Activated CD4-positive, alpha-beta memory T cell treated with anti-CD3 and anti-CD28 coated beads, Interleukin-2, amount 10 ng/mL, durations not matched to agents 7 days and 5 days (primary cell): ENCODE measurements at regions of chr6 and their contacts with region 1.

Region 1: DNA sequence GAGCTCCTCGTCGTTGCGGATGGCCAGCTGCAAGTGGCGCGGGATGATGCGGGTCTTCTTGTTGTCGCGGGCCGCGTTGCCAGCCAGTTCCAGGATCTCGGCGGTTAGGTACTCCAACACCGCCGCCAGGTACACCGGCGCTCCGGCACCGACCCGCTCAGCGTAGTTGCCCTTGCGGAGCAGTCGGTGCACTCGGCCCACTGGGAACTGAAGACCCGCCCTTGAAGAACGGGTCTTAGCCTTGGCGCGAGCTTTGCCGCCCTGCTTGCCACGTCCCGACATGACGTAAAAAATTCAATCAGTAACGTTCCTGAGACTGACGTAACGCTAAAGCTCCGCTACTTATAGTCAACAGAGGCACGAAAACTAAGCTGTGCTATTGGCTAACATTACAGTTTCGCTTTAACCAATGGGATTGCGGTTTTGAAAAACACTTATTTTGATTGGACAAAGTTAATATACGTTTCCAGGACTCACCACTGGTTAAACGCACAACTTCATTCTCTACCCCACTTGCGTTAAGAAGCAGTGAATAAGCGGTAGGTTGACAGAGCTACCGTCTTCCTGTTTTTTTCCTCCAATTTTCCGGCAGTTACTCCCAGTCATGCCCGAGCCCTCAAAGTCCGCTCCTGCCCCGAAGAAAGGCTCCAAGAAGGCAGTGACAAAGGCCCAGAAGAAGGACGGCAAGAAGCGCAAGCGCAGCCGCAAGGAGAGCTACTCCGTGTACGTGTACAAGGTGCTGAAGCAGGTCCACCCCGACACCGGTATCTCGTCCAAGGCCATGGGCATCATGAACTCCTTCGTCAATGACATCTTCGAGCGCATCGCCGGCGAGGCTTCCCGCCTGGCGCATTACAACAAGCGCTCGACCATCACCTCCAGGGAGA is 73.9 kb downstream of the OR2B2 start:
- DNase-seq: peak; percentile 90
- H3K4me3 Mint-ChIP-seq: no peak overlapping the region
- H3K27ac Mint-ChIP-seq: no peak overlapping the region
- H3K4me1 Mint-ChIP-seq: peaks cover 31% of the 10 kb centered on the region
- H3K27me3 Mint-ChIP-seq: no peaks in the 10 kb centered on the region

Region 2: DNA sequence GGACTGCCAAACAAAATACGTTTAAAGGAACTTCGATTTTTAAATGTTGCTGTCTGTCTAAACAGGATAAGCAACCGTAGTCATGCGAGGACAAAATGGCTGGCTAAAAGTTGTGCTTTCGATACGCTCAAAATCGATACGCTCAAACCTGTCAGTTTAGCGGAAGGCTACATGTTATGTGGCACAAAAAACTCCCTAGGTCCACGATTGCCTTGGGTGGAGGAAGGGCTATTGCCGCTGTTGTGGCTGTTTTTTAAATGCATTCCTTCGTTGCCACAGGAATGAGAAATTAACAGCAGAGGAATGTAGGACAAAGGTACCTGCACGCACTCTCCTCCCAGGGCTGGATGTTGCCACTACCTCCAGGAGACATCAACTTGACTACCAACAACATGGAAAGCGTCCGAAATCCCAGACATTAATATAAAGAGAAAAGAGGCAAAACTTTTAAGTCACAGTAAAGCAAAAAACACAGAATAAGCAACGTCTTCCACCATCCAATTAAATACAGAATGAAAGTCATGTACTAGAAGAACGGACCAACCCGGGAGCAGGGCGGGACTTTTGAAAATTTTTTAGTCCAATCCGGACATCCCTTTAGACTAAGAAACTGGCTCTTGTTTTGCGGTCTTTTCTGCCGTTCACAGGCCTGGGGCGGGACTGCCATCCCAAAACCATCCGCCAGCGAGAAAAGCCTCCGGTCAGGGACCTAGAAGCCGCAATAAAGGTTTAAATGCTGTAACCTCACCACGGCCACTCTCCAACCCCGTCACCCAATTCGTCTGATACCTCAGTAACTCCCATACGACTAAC is 1783.2 kb before region 1 on chr6:
- CTCF ChIA-PET with region 1: no interaction called
- POLR2A ChIA-PET with region 1: interaction called, 10 read pairs
- DNase-seq: peak; percentile 92
- H3K4me3 Mint-ChIP-seq: peak overlapping the region; percentile 83
- H3K27ac Mint-ChIP-seq: peak overlapping the region; percentile 99
- H3K4me1 Mint-ChIP-seq: peaks cover 37% of the 10 kb centered on the region
- H3K27me3 Mint-ChIP-seq: no peaks in the 10 kb centered on the region

Region 3: DNA sequence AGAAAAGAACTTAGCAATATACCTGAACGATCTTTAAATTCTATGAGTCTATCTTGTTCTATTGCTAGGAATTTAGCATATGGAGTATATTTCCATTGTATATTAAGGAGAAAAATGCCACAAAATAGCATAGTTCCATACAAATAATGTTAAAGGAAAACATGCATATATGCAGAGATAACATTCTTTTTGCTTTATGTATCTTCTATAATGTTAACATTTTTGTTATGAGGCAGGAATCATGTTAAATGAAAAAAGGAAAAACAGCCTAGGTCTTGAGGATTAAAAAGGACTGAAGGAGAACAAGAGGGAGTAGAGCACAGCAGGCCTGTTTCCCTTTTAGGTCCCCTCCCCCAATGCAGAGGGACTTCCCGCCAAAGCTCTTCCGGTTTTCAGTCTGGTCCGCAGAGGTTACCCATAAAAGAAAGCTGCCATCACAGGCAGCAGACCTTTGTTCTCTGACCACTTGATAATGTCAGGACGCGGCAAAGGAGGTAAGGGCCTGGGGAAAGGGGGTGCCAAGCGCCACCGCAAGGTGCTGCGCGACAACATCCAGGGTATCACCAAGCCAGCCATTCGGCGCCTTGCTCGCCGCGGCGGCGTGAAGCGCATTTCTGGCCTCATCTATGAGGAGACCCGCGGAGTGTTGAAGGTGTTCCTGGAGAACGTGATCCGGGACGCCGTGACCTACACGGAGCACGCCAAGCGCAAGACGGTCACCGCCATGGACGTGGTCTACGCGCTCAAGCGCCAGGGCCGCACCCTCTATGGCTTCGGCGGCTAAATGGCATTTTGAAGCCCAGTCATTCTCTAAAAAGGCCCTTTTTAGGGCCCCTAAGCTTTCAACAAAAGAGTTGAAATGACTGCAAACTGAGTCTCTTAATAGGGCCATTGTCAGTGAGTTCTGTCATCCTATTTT is 699.2 kb before region 1 on chr6:
- CTCF ChIA-PET with region 1: no interaction called
- POLR2A ChIA-PET with region 1: interaction called, 108 read pairs
- DNase-seq: peak; percentile 80
- H3K4me3 Mint-ChIP-seq: peak overlapping the region; percentile 91
- H3K27ac Mint-ChIP-seq: peak overlapping the region; percentile 98
- H3K4me1 Mint-ChIP-seq: peaks cover 67% of the 10 kb centered on the region
- H3K27me3 Mint-ChIP-seq: no peaks in the 10 kb centered on the region

Region 4: DNA sequence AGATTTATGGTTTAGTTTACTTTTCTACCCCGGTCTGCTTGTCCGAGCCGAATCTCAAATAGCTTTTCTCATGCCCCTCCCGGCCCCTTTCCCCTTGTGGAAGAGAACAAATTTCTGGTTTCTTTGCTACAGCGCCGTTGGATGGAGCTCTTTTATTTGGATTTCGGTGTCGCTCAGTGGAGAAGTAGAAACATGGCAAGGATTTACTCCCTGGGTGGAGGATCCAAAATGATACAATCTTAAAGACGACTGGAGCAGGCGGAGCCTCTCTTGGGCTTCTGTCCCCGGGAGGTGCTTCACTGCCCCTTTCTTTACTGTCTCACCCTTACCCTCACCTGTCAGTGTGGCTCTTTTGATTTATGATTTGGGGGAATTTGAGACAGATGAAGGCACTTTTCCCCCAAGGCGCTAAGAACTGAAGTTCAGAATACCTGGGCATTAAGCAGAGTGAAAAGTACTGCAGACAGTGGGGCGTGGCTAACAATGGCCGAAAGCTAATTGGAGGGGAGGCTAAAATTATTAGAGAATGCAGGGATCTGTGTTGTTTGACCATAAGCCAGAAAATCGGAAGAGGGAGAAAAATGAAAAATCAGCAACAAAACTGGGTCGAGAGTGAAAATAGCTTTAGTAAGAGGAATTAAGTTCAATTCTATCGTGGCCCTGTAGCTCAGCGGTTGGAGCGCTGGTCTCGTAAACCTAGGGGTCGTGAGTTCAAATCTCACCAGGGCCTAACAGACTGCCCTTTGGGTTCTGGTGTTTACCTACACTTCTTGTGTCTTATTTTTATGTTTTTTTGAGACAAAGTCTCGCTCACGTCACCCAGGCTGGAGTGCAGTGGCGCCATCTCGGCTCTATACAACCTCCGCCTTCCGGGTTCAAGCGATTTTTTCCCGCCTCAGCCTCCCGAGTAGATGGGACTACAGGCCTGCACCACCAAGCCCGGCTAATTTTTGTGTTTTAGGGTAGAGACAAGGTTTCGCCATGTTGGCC is 220.3 kb before region 1 on chr6:
- CTCF ChIA-PET with region 1: no interaction called
- POLR2A ChIA-PET with region 1: no interaction called
- DNase-seq: no peak
- H3K4me3 Mint-ChIP-seq: peak overlapping the region; percentile 48
- H3K27ac Mint-ChIP-seq: no peak overlapping the region
- H3K4me1 Mint-ChIP-seq: peaks cover 16% of the 10 kb centered on the region
- H3K27me3 Mint-ChIP-seq: peaks cover 56% of the 10 kb centered on the region

Region 5: DNA sequence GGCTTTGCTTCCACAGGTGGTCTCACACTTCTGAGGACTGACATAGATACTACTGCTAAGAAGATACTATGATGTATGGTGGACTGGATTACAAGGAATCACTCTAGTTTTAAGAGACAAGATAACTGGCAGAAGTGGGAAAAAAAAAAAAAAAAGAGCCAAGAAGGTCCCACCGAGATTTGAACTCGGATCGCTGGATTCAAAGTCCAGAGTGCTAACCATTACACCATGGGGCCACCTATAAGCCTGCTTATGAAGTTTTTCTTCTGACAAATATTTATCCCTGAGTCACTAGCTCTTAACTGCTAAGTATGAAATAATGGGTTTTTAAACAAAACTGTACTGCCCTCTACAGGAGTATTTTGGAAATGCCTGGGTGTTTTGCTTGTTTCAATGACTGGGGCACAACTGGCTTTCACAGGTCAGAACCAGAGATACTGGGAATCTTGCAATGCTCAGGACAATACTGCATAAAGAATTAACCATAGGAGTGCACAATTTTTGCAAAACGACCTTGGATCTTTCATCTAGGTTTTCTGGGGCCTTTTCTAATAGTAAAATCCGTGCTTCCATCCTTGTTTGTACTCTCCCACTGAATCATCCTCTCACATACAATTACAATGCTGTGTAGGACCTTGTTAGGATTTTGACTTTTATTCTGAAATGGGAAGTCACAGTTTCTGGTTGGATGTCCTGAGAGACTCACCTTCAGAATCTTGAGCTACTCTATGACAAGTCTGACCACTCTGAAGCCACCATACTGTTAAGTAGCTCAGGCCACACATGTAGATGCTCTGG is 42.4 kb before region 1 on chr6:
- CTCF ChIA-PET with region 1: interaction called, 3 read pairs
- POLR2A ChIA-PET with region 1: interaction called, 13 read pairs
- DNase-seq: peak; percentile 40
- H3K4me3 Mint-ChIP-seq: no peak overlapping the region
- H3K27ac Mint-ChIP-seq: no peak overlapping the region
- H3K4me1 Mint-ChIP-seq: peaks cover 51% of the 10 kb centered on the region
- H3K27me3 Mint-ChIP-seq: peaks cover 16% of the 10 kb centered on the region

Region 6: GRCh38 chr6:28136585-28137504 is 298.5 kb after region 1 on chr6:
- CTCF ChIA-PET with region 1: no interaction called
- POLR2A ChIA-PET with region 1: interaction called, 12 read pairs
- DNase-seq: peak; percentile 74
- H3K4me3 Mint-ChIP-seq: peak overlapping the region; percentile 92
- H3K27ac Mint-ChIP-seq: peak overlapping the region; percentile 88
- H3K4me1 Mint-ChIP-seq: peaks cover 71% of the 10 kb centered on the region
- H3K27me3 Mint-ChIP-seq: no peaks in the 10 kb centered on the region

Region 7: GRCh38 chr6:28553986-28554881 is 715.9 kb after region 1 on chr6:
- CTCF ChIA-PET with region 1: no interaction called
- POLR2A ChIA-PET with region 1: no interaction called
- DNase-seq: no peak
- H3K4me3 Mint-ChIP-seq: no peak overlapping the region
- H3K27ac Mint-ChIP-seq: no peak overlapping the region
- H3K4me1 Mint-ChIP-seq: no peaks in the 10 kb centered on the region
- H3K27me3 Mint-ChIP-seq: peaks cover 54% of the 10 kb centered on the region